ENCODE measurements at regions of chr7 and their contacts with region 1.

Region 1: DNA sequence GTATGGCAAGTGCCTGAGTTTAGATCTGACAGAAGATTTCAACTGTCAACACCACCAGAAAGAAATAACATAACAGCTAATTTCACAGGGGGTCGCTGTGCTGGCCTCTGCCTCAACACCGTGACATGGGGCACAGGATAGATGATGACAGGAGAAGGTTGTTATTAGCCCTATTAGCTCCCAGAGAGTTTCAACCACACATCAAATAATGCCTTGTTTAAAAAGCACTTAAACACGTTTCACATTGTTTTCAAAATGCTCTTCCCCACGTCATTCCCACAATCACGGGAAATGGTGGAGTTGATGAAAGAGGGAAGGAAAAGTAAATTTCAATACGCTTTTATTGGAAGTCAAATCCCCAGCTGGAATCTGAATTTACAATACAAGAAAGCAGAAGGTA is 184.7 kb downstream of the MAGI2 start:
- DNase-seq: no peak
- H3K4me3 Mint-ChIP-seq: no peak overlapping the region
- H3K27ac Mint-ChIP-seq: no peak overlapping the region
- H3K4me1 Mint-ChIP-seq: no peaks in the 10 kb centered on the region
- H3K27me3 Mint-ChIP-seq: no peaks in the 10 kb centered on the region

Region 2: DNA sequence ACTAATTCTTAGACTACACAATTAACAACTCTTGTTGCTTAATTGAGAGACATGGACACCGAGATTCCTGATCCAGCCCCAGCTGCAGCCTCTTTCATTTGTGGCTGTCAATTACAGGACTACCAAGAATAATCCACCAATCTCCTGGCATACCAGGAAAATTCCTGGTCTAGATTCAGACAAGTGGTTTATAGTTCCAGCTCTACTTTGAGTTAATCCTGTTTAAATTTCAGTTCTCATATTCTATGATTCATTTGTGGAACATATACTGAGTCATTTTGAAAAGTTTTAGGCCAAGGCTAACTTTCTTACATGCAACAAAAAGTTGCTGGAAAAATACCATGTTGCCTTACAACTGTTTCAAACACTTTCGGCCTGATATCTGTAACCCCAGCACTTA is 68.8 kb before region 1 on chr7:
- intact Hi-C with region 1: loop called (anchors 10 kb)
- DNase-seq: no peak
- H3K4me3 Mint-ChIP-seq: no peak overlapping the region
- H3K27ac Mint-ChIP-seq: no peak overlapping the region
- H3K4me1 Mint-ChIP-seq: no peaks in the 10 kb centered on the region
- H3K27me3 Mint-ChIP-seq: no peaks in the 10 kb centered on the region

Measured in activated T-helper 1 cell treated with anti-CD3 and anti-CD28 coated beads, Interleukin-12 subunit alpha, Interleukin-12 subunit beta, Interleukin-2, Interleukin-4 antibody, amounts not matched to agents 30 ng/mL and 10 ng/mL and 1 ng/mL, durations not matched to agents 14 hours and 24 hours and 36 hours (primary cell).